PC-9 (cell line): ENCODE measurements at regions of chr12 and their contacts with region 1.

Region 1: DNA sequence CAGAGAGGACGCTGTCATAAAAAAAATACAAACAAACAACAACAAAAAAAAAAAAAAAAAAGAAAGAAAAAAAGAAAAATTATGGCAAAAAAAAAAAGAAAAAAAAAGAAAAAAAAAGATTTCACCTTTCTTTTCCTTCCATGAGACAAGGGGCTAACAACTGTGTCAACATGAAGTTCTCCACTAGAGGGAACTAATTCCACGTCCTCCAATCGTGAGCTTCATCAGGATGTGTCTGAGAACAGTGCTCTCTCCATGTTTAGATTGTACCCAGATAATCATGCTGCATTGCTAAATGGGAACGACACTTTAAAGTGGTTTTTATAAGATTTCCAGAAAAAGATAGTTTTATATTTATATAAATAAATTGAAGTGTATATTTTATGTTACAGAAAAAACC is 96.2 kb upstream of the PTPRB start:
- DNase-seq: peak; percentile 30 to 43
- H3K4me3 ChIP-seq: no peak overlapping the region
- H3K27ac ChIP-seq: no peak overlapping the region
- H3K4me1 ChIP-seq: no peaks in the 10 kb centered on the region
- H3K27me3 ChIP-seq: no peaks in the 10 kb centered on the region
- CTCF ChIP-seq: peak; percentile 85

Region 2: GRCh38 chr12:70660620-70661219 is 72.7 kb before region 1 on chr12:
- CTCF ChIA-PET with region 1: no interaction called
- POLR2A ChIA-PET with region 1: no interaction called
- intact Hi-C with region 1: no loop called
- DNase-seq: peak in 1 of 2 experiments; percentile 65
- H3K4me3 ChIP-seq: no peak overlapping the region
- H3K27ac ChIP-seq: no peak overlapping the region
- H3K4me1 ChIP-seq: peaks cover 18% of the 10 kb centered on the region; the same call in 1 of the 2 replicates
- H3K27me3 ChIP-seq: no peaks in the 10 kb centered on the region
- CTCF ChIP-seq: no peak

Region 3: GRCh38 chr12:70823182-70823976 is 90.0 kb after region 1 on chr12:
- CTCF ChIA-PET with region 1: interaction called, 3 read pairs
- POLR2A ChIA-PET with region 1: no interaction called
- intact Hi-C with region 1: loop called (anchors 5 kb)
- DNase-seq: no peak
- H3K4me3 ChIP-seq: no peak overlapping the region
- H3K27ac ChIP-seq: no peak overlapping the region
- H3K4me1 ChIP-seq: no peaks in the 10 kb centered on the region
- H3K27me3 ChIP-seq: no peaks in the 10 kb centered on the region
- CTCF ChIP-seq: peak; percentile 34

Region 4: GRCh38 chr12:70849265-70849960 is 116.0 kb after region 1 on chr12:
- CTCF ChIA-PET with region 1: interaction called, 23 read pairs
- POLR2A ChIA-PET with region 1: no interaction called
- intact Hi-C with region 1: loop called (anchors 1 kb)
- DNase-seq: peak in 1 of 2 experiments; percentile 37
- H3K4me3 ChIP-seq: no peak overlapping the region
- H3K27ac ChIP-seq: no peak overlapping the region
- H3K4me1 ChIP-seq: no peaks in the 10 kb centered on the region
- H3K27me3 ChIP-seq: no peaks in the 10 kb centered on the region
- CTCF ChIP-seq: peak; percentile 63